ENCODE measurements at regions of chr12 and their contacts with region 1.

Region 1: GRCh38 chr12:109110988-109111495 is 5.3 kb upstream of the ACACB start:
- DNase-seq: peak; percentile 16 to 68 (median 40)
- H3K4me3 ChIP-seq: peak overlapping the region; percentile 32
- H3K4me3 Mint-ChIP-seq: peak overlapping the region; percentile 51 to 86 (median 79)
- H3K27ac ChIP-seq: peak overlapping the region; percentile 45
- H3K27ac Mint-ChIP-seq: peak overlapping the region; percentile 49 to 96 (median 84)
- H3K4me1 ChIP-seq: no peaks in the 10 kb centered on the region
- H3K4me1 Mint-ChIP-seq: peaks cover 0 to 35% (median 14%) of the 10 kb centered on the region in 3 donors
- H3K27me3 ChIP-seq: no peaks in the 10 kb centered on the region
- H3K27me3 Mint-ChIP-seq: no peaks in the 10 kb centered on the region

Region 2: DNA sequence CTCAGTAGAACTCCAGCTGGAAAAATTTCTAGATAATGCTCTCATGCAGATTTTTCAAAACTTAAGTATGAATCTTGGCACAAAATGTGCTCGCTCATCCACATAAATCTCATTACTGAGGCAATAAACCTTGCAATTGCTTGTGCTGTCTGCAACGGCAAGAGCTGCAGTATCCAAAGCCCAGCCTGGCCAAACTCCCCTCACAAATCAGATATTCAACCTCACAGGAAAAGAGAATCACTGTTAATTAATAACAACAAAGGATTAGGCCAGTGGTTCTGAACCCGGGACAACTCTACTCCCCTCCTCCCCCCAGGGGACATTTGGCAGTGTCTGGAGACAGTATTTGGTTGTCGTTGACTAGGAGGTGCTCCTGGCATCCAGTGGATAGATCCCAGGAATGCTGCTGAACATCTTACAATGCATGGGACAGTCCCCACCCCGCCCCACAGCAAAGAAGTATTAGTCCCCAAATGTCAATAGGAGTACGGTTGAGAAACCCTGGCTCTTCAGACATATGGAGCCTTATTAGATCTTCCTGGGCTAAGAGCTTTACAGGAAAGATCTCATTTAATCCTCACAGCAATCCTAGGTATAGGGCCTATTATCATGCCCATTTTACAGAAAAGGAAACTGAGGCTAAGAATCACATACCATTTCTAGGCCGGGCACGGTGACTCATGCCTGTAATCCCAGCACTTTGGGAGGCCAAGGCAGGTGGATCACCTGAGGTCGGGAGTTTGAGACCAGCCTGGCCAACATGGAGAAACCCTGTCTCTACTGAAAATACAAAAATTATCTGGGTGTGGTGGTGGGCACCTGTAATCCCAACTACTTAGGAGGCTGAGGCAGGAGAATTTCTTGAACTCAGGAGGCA is 360.3 kb before region 1 on chr12:
- CTCF ChIA-PET with region 1: no interaction called
- POLR2A ChIA-PET with region 1: no interaction called
- DNase-seq: no peak
- H3K4me3 ChIP-seq: no peak overlapping the region
- H3K4me3 Mint-ChIP-seq: no peak overlapping the region
- H3K27ac ChIP-seq: no peak overlapping the region
- H3K27ac Mint-ChIP-seq: no peak overlapping the region
- H3K4me1 ChIP-seq: no peaks in the 10 kb centered on the region
- H3K4me1 Mint-ChIP-seq: no peaks in the 10 kb centered on the region
- H3K27me3 ChIP-seq: no peaks in the 10 kb centered on the region
- H3K27me3 Mint-ChIP-seq: peaks cover 0 to 3% of the 10 kb centered on the region in 2 donors

Region 3: DNA sequence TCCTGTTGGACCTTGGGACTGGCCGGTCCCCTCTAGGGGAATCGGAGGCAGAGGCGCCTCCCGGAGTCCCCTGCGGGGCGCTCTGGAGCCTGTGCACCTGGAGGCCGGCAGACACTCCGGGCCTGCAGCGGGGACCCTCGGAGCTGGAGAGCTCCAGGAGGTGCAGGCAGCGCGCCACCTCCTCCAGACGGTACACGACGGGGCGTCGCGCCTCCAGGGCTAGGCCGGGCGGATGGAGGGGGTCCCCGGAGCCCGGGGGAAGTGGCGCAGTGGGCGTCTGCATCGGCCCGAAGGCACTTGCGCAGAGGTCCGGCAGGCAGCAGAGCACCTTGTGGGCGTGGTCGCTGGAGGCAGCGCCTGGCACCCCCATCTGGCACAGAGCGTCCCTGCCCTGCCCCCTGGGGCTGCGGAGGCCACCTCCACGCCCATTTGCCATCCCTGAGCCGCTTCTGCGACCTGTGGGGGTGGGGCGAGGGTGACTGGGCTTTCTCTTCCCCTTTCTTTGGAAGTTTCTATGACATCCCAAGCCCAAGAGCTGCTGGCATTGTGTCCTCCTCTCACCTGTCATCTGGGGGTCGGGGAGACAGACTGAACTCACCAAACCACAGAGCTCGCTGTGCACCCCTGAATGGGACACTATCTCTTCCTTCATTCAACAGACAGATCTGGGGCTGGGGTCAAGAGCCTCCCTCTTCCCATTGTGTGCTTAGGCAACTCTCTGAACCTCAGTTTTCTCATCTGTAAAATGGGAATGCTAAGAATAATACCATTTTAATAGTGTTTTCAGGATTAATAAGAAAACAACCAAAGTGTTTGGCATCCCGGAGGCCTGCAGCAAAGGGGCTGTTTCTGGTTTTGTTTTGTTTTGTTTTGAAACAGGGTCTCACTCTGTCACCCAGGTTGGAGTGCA is 342.2 kb before region 1 on chr12:
- CTCF ChIA-PET with region 1: no interaction called
- POLR2A ChIA-PET with region 1: no interaction called
- DNase-seq: peak in 1 of 5 donors; percentile 7
- H3K4me3 ChIP-seq: no peak overlapping the region
- H3K4me3 Mint-ChIP-seq: peak overlapping the region in 2 of 7 donors; percentile 20 to 37
- H3K27ac ChIP-seq: no peak overlapping the region
- H3K27ac Mint-ChIP-seq: no peak overlapping the region
- H3K4me1 ChIP-seq: no peaks in the 10 kb centered on the region
- H3K4me1 Mint-ChIP-seq: peaks cover 3 to 8% (median 4%) of the 10 kb centered on the region in 3 donors
- H3K27me3 ChIP-seq: no peaks in the 10 kb centered on the region
- H3K27me3 Mint-ChIP-seq: peaks cover 5 to 12% of the 10 kb centered on the region in 2 donors

Region 4: GRCh38 chr12:109099431-109100020 is 11.5 kb before region 1 on chr12:
- CTCF ChIA-PET with region 1: interaction called, 27 read pairs
- POLR2A ChIA-PET with region 1: no interaction called
- DNase-seq: peak in 2 of 5 donors; percentile 12 to 48
- H3K4me3 ChIP-seq: peak overlapping the region; percentile 80
- H3K4me3 Mint-ChIP-seq: peak overlapping the region; percentile 85 to 93 (median 88)
- H3K27ac ChIP-seq: no peak overlapping the region
- H3K27ac Mint-ChIP-seq: peak overlapping the region; percentile 78 to 98 (median 86)
- H3K4me1 ChIP-seq: peaks cover 17% of the 10 kb centered on the region
- H3K4me1 Mint-ChIP-seq: peaks cover 30 to 39% (median 31%) of the 10 kb centered on the region in 3 donors
- H3K27me3 ChIP-seq: no peaks in the 10 kb centered on the region
- H3K27me3 Mint-ChIP-seq: peaks cover 0 to 2% of the 10 kb centered on the region in 2 donors